ENCODE measurements at regions of chr1 and their contacts with region 1.

Region 1: GRCh38 chr1:160539990-160540858 is 17.2 kb upstream of the SLAMF6 start:
- DNase-seq: peak; percentile 81
- ATAC-seq: peak; percentile 93
- H3K4me3 Mint-ChIP-seq: peak overlapping the region; percentile 32
- H3K27ac Mint-ChIP-seq: peak overlapping the region; percentile 85
- H3K4me1 Mint-ChIP-seq: peaks cover 48% of the 10 kb centered on the region
- H3K27me3 Mint-ChIP-seq: no peaks in the 10 kb centered on the region

Region 2: DNA sequence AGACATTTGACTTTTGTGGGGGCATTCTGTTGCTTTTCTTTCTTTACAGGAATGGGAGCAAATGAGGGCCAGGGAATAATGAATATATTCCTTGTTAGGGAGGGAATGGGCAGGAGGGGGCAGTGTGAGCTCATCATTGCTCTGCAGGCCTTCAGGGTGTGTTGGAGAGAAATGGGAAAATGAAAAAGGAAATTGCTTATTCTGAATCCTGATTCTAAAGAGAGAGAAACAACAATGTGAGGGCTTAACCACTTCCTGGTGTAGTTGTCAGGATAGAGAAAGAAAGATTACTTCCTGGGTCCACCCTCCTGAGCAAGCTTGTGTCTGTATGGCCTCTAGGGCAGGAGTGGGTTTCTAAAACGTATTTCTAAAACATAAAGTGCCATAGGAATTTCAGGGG is 111.6 kb before region 1 on chr1:
- CTCF ChIA-PET with region 1: interaction called, 23 read pairs
- DNase-seq: peak; percentile 51
- ATAC-seq: peak; percentile 56
- H3K4me3 Mint-ChIP-seq: peak overlapping the region; percentile 51
- H3K27ac Mint-ChIP-seq: peak overlapping the region; percentile 83
- H3K4me1 Mint-ChIP-seq: peaks cover 55% of the 10 kb centered on the region
- H3K27me3 Mint-ChIP-seq: no peaks in the 10 kb centered on the region

Region 3: GRCh38 chr1:160522622-160523345 is 17.4 kb before region 1 on chr1 and contains the start of gene SLAMF6:
- CTCF ChIA-PET with region 1: interaction called, 18 read pairs
- DNase-seq: peak; percentile 72
- ATAC-seq: peak; percentile 57
- H3K4me3 Mint-ChIP-seq: peak within 1 kb of the TSS; percentile 88
- H3K27ac Mint-ChIP-seq: peak within 1 kb of the TSS; percentile 96
- H3K4me1 Mint-ChIP-seq: peaks cover 64% of the 10 kb centered on the region
- H3K27me3 Mint-ChIP-seq: no peaks in the 10 kb centered on the region
- total RNA-seq, gene SLAMF6: 28.8 to 31.0 TPM

Region 4: DNA sequence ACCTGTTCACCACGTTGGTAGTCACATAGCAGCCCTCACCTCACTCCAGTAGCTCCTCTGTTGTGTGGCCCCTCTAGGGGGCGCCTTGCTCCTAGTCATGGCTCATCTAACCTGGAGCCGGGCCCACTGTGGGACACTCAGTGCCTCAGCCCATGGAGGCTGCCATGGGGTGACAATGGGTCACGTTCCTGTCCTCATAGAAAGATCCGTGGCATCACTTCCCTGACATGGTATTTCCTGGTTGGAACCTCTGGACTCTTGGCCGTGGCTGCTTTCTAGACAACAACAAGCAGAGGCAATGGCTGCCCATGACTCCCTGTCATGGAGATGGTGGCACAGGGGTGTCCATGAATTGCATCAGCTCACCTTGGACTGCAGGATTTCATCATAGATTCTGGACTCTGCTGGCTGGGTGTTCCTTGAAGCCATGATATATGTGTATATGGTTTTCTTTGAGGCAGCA is 10.4 kb after region 1 on chr1:
- CTCF ChIA-PET with region 1: interaction called, 21 read pairs
- DNase-seq: peak; percentile 71
- ATAC-seq: peak; percentile 80
- H3K4me3 Mint-ChIP-seq: no peak overlapping the region
- H3K27ac Mint-ChIP-seq: peak overlapping the region; percentile 9
- H3K4me1 Mint-ChIP-seq: no peaks in the 10 kb centered on the region
- H3K27me3 Mint-ChIP-seq: no peaks in the 10 kb centered on the region

Region 5: DNA sequence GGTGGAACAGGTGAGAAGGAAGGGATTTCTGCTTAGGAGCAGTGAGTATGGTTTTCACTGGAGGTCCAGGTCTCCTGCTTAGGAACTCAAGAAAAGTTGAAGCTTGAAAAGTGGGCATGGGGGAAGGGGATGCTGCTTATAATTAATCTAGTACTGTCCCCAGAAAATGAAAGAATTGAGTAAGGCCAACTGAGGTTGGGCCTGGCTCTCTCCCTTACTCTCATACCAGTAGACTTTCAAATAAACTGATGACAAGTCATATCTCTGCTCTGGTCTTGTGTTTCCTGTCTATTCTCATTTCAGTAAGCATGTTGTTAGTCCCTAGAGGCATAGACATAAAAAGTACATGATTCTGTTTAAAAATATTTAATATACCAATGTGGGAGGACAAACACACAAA is 145.0 kb after region 1 on chr1:
- CTCF ChIA-PET with region 1: no interaction called
- DNase-seq: peak; percentile 69
- ATAC-seq: peak; percentile 64
- H3K4me3 Mint-ChIP-seq: peak overlapping the region; percentile 40
- H3K27ac Mint-ChIP-seq: peak overlapping the region; percentile 92
- H3K4me1 Mint-ChIP-seq: peaks cover 94% of the 10 kb centered on the region
- H3K27me3 Mint-ChIP-seq: no peaks in the 10 kb centered on the region

Measured in activated CD8-positive, alpha-beta memory T cell treated with anti-CD3 and anti-CD28 coated beads, Interleukin-2, amount 10 ng/mL, durations not matched to agents 7 days and 5 days (primary cell).